CD4-positive, alpha-beta T cell (primary cell): ENCODE measurements at regions of chr22 and their contacts with region 1.

Region 1: GRCh38 chr22:31977141-31977841 is 33.0 kb downstream of the YWHAH start:
- DNase-seq: peak; percentile 58 to 84 (median 74)
- ATAC-seq: peak; percentile 95
- H3K4me3 ChIP-seq: no peak overlapping the region
- H3K4me3 Mint-ChIP-seq: no peak overlapping the region
- H3K27ac ChIP-seq: no peak overlapping the region
- H3K27ac Mint-ChIP-seq: no peak overlapping the region
- H3K4me1 ChIP-seq: no peaks in the 10 kb centered on the region
- H3K4me1 Mint-ChIP-seq: no peaks in the 10 kb centered on the region
- H3K27me3 ChIP-seq: no peaks in the 10 kb centered on the region
- H3K27me3 Mint-ChIP-seq: no peaks in the 10 kb centered on the region
- CTCF ChIP-seq: peak; percentile 71

Region 2: GRCh38 chr22:32080904-32081303 is 103.6 kb after region 1 on chr22:
- CTCF ChIA-PET with region 1: no interaction called
- POLR2A ChIA-PET with region 1: no interaction called
- intact Hi-C with region 1: loop called (anchors 1 kb)
- DNase-seq: peak in 6 of 14 experiments; percentile 2 to 64 (median 39)
- ATAC-seq: peak; percentile 67
- H3K4me3 ChIP-seq: no peak overlapping the region
- H3K4me3 Mint-ChIP-seq: no peak overlapping the region
- H3K27ac ChIP-seq: no peak overlapping the region
- H3K27ac Mint-ChIP-seq: no peak overlapping the region
- H3K4me1 ChIP-seq: no peaks in the 10 kb centered on the region
- H3K4me1 Mint-ChIP-seq: no peaks in the 10 kb centered on the region
- H3K27me3 ChIP-seq: peaks cover 0 to 7% of the 10 kb centered on the region in 2 experiments
- H3K27me3 Mint-ChIP-seq: peaks cover 3% of the 10 kb centered on the region
- CTCF ChIP-seq: peak; percentile 56

Region 3: GRCh38 chr22:32202539-32203180 is 225.4 kb after region 1 on chr22:
- CTCF ChIA-PET with region 1: no interaction called
- POLR2A ChIA-PET with region 1: no interaction called
- intact Hi-C with region 1: loop called in 1 of 2 experiments (anchors 5 kb)
- DNase-seq: peak in 6 of 14 experiments; percentile 16 to 64 (median 45)
- ATAC-seq: no peak
- H3K4me3 ChIP-seq: peak overlapping the region; percentile 58
- H3K4me3 Mint-ChIP-seq: peak overlapping the region; percentile 89
- H3K27ac ChIP-seq: no peak overlapping the region
- H3K27ac Mint-ChIP-seq: peak overlapping the region; percentile 52
- H3K4me1 ChIP-seq: peaks cover 70% of the 10 kb centered on the region
- H3K4me1 Mint-ChIP-seq: peaks cover 54% of the 10 kb centered on the region
- H3K27me3 ChIP-seq: peaks cover 9% of the 10 kb centered on the region in 2 experiments
- H3K27me3 Mint-ChIP-seq: peaks cover 31% of the 10 kb centered on the region
- CTCF ChIP-seq: peak; percentile 35

Region 4: DNA sequence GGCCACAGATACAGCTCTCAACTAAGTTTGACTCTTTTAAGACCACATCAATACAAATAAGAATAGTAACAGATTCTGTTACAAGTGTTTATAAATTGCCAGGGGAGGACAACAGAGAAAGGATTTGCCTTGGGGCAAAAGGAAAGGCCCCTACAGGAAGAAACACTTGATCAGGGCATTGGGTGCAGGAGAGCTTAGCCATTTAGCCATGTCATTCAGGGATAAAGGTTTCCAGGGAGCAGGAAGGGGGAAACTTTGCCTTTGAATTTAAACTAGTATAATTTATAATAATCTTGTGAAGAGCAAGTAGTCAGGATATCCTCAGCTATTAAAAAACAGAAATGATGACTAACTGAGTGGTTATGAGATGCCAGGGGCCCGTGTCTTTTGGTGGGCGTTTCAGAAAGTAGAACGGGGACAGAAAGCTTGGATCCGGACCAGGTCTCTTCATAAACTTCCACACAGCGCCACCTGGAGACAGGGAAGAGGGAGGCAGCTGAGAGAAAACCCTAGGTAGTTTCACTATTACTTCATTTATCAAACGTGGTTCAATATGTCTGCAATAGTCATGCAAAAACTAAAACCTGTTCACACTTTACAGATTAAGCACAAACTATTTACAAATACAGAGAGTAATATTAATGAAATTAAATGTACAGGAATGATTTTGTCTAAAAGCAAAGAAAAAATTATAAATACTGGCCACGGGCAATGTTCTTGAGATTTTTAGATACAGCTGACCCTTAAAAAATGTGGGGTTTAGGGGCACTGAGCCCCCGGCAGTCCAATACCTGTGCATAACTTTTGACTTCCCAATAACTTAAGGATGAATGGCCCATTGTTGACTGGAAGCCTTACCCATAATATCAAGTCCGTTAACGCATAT is 288.8 kb after region 1 on chr22:
- CTCF ChIA-PET with region 1: interaction called, 3 read pairs
- POLR2A ChIA-PET with region 1: no interaction called
- intact Hi-C with region 1: loop called (anchors 1 to 2 kb)
- DNase-seq: peak; percentile 40 to 81 (median 56)
- ATAC-seq: peak; percentile 66
- H3K4me3 ChIP-seq: no peak overlapping the region
- H3K4me3 Mint-ChIP-seq: no peak overlapping the region
- H3K27ac ChIP-seq: no peak overlapping the region
- H3K27ac Mint-ChIP-seq: no peak overlapping the region
- H3K4me1 ChIP-seq: peaks cover 4% of the 10 kb centered on the region
- H3K4me1 Mint-ChIP-seq: peaks cover 10% of the 10 kb centered on the region
- H3K27me3 ChIP-seq: no peaks in the 10 kb centered on the region
- H3K27me3 Mint-ChIP-seq: peaks cover 9% of the 10 kb centered on the region
- CTCF ChIP-seq: peak; percentile 86

Region 5: GRCh38 chr22:33000342-33001280 is 1023.3 kb after region 1 on chr22:
- CTCF ChIA-PET with region 1: no interaction called
- POLR2A ChIA-PET with region 1: no interaction called
- intact Hi-C with region 1: loop called in 1 of 2 experiments (anchors 5 kb)
- DNase-seq: peak in 10 of 14 experiments; percentile 3 to 41 (median 14)
- ATAC-seq: no peak
- H3K4me3 ChIP-seq: no peak overlapping the region
- H3K4me3 Mint-ChIP-seq: no peak overlapping the region
- H3K27ac ChIP-seq: no peak overlapping the region
- H3K27ac Mint-ChIP-seq: no peak overlapping the region
- H3K4me1 ChIP-seq: no peaks in the 10 kb centered on the region
- H3K4me1 Mint-ChIP-seq: no peaks in the 10 kb centered on the region
- H3K27me3 ChIP-seq: no peaks in the 10 kb centered on the region
- H3K27me3 Mint-ChIP-seq: peaks cover 9% of the 10 kb centered on the region
- CTCF ChIP-seq: peak; percentile 69